Endothelial cell of umbilical vein (primary cell): ENCODE measurements at regions of chr20 and their contacts with region 1.

Region 1: DNA sequence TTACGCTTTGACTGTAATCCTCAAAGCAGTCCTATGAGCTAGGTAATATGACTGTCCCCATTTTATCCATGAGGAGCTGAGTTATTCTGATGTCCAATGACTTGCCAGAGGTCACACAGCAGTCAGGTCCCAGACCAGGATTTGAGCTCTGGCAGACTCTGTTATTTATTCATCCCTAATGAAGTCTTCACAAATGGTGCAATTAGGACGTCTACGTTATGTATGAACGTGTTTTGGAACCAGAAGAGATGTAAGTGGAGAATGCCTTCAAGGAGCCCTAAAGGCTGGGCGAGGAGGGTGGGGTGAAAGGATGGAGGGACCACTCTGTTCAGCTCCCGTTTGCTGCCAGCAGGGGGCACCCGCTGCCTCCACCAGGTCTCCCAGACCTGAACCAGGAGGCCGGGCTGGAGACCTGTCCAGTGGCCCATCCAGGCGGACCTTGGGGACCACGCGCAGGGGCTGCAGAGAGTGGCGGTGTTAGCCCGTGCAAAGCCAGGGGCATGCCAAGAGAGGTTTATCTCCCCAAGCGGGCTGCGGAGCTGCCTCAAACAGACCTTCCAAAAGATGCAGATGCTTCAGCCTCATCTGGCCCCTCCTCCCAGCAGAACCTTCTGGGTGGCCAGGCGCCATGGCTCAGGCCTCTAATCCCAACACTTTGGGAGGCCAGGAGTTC is 15.2 kb upstream of the ZNF335 start:
- DNase-seq: peak; percentile 64
- H3K4me3 ChIP-seq: no peak overlapping the region
- H3K27ac ChIP-seq: no peak overlapping the region
- H3K4me1 ChIP-seq: no peaks in the 10 kb centered on the region
- H3K27me3 ChIP-seq: peaks cover 4 to 8% of the 10 kb centered on the region in 2 experiments
- CTCF ChIP-seq: peak; percentile 83 to 94
- POLR2A ChIP-seq: no peak

Region 2: GRCh38 chr20:45998761-45999160 is 11.5 kb after region 1 on chr20:
- CTCF ChIA-PET with region 1: interaction called, 48 read pairs
- POLR2A ChIA-PET with region 1: no interaction called
- dilution Hi-C with region 1: no loop called
- intact Hi-C with region 1: no loop called
- DNase-seq: no peak
- H3K4me3 ChIP-seq: no peak overlapping the region
- H3K27ac ChIP-seq: no peak overlapping the region
- H3K4me1 ChIP-seq: no peaks in the 10 kb centered on the region
- H3K27me3 ChIP-seq: peaks cover 12 to 19% of the 10 kb centered on the region in 2 experiments
- CTCF ChIP-seq: no peak
- POLR2A ChIP-seq: no peak

Region 3: DNA sequence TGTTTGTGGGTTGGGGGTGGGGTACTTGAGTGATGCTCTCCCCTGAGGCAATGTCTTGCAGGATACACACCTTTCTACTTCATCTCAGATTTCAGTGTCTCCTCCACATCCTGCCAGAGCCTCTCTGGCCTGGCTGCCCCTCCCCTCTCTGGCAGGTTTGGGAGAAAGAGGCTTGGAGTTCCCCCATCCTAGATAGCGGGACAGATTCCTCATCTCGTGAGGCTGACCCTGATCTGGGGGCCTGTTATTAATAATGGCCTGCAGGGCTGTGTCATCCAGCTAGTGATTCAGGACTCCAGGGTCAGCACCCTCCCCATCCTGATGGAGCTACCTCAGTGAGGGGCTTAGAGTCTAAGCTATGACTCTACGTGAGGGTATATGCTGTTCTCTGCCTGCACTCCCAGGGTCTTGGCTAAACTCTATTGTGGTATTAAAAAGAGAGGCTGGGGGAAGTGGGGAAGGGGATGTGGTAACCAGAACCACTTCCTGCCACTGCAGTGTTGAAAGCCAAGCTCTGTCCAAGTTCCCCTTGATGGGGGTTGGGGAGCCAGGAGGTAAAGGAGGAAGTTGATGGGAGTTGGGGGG is 17.7 kb after region 1 on chr20:
- CTCF ChIA-PET with region 1: interaction called, 48 read pairs
- POLR2A ChIA-PET with region 1: no interaction called
- dilution Hi-C with region 1: no loop called
- intact Hi-C with region 1: loop called (anchors 2 kb)
- DNase-seq: no peak
- H3K4me3 ChIP-seq: no peak overlapping the region
- H3K27ac ChIP-seq: no peak overlapping the region
- H3K4me1 ChIP-seq: peaks cover 4% of the 10 kb centered on the region
- H3K27me3 ChIP-seq: peaks cover 27 to 37% of the 10 kb centered on the region in 2 experiments
- CTCF ChIP-seq: no peak
- POLR2A ChIP-seq: no peak

Region 4: DNA sequence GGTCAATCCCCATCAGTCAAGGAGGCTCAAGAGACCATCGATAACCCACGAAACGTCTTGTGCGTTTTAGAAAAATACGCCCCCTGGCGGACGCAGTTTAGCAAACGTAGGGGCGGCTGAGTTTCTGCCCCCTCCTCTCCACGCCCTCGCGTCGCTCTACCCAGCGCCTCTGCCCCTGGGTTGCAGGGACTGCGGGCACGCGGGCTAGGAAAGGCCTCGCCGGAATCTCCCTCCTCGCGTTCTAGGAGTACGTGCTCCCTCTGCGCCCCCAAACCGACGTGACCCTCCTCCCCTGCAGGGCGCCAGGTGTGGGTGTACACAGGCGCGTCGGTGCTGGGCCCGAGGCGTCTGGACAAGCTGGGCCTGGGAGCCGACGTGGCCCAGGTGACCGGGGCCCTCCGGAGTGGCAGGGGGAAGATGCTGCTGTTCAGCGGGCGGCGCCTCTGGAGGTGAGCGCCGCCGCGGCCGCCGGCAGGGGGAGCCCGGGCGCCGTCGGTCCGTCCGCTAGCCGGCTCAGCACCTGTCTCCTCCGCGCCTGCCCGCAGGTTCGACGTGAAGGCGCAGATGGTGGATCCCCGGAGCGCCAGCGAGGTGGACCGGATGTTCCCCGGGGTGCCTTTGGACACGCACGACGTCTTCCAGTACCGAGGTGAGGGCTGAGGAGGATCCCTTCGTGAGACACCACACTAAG is 26.7 kb after region 1 on chr20:
- CTCF ChIA-PET with region 1: interaction called, 55 read pairs
- POLR2A ChIA-PET with region 1: no interaction called
- dilution Hi-C with region 1: no loop called
- intact Hi-C with region 1: loop called (anchors 2 kb)
- DNase-seq: peak; percentile 31
- H3K4me3 ChIP-seq: no peak overlapping the region
- H3K27ac ChIP-seq: no peak overlapping the region
- H3K4me1 ChIP-seq: no peaks in the 10 kb centered on the region
- H3K27me3 ChIP-seq: peaks cover 39 to 46% of the 10 kb centered on the region in 2 experiments
- CTCF ChIP-seq: peak; percentile 74 to 85
- POLR2A ChIP-seq: no peak

Region 5: DNA sequence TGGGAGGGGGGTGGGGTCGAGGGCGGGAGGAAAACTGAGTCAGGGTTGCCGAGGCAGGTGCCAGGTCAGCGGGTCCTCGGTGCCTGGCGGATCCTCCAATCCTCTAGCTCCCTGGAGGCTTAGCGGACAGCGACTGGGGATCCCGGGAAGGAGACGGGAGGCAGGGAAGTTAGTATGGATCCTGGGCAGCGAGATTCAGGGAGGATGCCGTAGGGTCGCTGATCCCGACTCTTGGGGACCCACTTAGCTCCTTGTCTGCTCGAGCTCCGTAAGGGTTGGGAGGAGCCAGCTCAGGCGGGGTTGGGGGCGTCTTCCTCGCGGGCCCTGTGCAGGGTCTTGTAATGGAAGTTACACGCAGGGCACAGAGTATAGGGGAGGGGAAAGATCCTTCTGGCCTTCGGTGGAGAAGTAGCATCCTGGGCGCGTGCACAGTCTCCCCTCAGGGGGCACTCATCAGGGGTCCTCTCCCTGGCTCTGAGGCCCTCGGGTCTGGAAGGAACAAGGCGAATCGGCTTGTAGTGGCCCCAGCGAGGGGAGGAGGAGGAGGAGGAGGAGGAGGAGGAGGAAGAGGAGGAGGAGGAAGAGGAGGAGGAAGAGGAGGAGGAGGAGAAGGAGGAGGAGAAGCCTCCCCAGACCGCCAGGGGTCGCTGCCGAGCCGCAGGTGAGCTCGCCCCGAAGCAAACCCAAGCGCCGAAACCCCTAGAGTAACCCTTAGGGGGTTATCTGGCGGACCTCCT is 35.3 kb after region 1 on chr20:
- CTCF ChIA-PET with region 1: interaction called, 17 read pairs
- POLR2A ChIA-PET with region 1: no interaction called
- dilution Hi-C with region 1: no loop called
- intact Hi-C with region 1: no loop called
- DNase-seq: no peak
- H3K4me3 ChIP-seq: no peak overlapping the region
- H3K27ac ChIP-seq: no peak overlapping the region
- H3K4me1 ChIP-seq: no peaks in the 10 kb centered on the region
- H3K27me3 ChIP-seq: peaks cover 10 to 22% of the 10 kb centered on the region in 2 experiments
- CTCF ChIP-seq: peak; percentile 53 to 77
- POLR2A ChIP-seq: no peak

Region 6: DNA sequence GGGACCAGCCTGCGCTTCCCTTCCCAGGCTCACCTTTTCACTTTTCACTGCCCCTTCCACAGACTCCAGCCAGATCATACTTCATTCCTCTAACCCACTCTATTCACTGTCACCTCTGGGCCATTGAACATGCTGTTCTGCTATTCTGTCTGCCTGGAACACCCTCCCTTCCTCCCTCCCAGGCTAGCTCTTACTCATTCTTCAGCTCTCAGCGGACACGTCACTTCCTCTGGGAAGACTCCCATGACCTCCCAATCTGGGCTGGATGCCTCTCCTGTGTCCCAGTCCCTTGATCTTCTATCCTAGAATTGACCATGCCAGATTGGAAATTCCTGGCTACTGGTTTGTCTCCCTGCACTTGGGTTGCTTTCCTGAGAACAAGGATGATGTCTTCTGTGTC is 46.8 kb after region 1 on chr20:
- CTCF ChIA-PET with region 1: no interaction called
- POLR2A ChIA-PET with region 1: no interaction called
- dilution Hi-C with region 1: no loop called
- intact Hi-C with region 1: no loop called
- DNase-seq: no peak
- H3K4me3 ChIP-seq: no peak overlapping the region
- H3K27ac ChIP-seq: no peak overlapping the region
- H3K4me1 ChIP-seq: no peaks in the 10 kb centered on the region
- H3K27me3 ChIP-seq: peaks cover 35 to 41% of the 10 kb centered on the region in 2 experiments
- CTCF ChIP-seq: no peak
- POLR2A ChIP-seq: no peak

Region 7: DNA sequence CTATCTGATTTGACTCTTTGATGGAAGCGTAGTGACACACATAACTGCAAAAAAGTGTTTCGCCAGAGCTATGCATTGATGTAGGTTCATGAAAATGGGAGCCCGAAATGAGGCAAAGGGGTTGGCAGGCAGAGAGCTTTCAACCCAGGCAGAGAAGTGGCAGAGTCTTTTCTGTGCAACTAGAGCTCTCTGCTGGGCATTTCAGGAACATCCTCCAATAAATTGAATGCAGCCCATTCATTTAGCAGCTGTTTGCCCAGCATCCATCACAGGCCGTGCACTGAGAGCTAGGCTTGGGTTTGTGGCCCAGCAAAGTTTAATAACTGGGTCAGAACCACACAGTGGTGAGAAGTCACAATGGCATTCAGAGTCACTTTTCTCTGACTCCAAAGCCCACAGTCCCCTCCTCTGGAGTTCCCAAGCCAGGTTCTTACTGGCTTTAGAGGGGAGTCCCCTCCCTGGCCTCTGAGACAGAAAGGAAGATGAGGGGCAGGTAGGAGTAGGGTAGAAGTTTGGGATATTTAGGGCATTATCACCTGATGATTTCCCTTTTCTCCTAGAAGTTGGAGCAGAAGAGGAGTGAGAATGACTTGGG is 451.0 kb after region 1 on chr20:
- CTCF ChIA-PET with region 1: interaction called, 11 read pairs
- POLR2A ChIA-PET with region 1: no interaction called
- dilution Hi-C with region 1: no loop called
- intact Hi-C with region 1: no loop called
- DNase-seq: peak; percentile 15
- H3K4me3 ChIP-seq: no peak overlapping the region
- H3K27ac ChIP-seq: no peak overlapping the region
- H3K4me1 ChIP-seq: no peaks in the 10 kb centered on the region
- H3K27me3 ChIP-seq: peaks cover 0 to 2% of the 10 kb centered on the region in 2 experiments
- CTCF ChIP-seq: peak in 1 of 2 donors; percentile 30
- POLR2A ChIP-seq: no peak